IMR-90 (cell line): ENCODE measurements at regions of chr12 and their contacts with region 1.

Region 1: DNA sequence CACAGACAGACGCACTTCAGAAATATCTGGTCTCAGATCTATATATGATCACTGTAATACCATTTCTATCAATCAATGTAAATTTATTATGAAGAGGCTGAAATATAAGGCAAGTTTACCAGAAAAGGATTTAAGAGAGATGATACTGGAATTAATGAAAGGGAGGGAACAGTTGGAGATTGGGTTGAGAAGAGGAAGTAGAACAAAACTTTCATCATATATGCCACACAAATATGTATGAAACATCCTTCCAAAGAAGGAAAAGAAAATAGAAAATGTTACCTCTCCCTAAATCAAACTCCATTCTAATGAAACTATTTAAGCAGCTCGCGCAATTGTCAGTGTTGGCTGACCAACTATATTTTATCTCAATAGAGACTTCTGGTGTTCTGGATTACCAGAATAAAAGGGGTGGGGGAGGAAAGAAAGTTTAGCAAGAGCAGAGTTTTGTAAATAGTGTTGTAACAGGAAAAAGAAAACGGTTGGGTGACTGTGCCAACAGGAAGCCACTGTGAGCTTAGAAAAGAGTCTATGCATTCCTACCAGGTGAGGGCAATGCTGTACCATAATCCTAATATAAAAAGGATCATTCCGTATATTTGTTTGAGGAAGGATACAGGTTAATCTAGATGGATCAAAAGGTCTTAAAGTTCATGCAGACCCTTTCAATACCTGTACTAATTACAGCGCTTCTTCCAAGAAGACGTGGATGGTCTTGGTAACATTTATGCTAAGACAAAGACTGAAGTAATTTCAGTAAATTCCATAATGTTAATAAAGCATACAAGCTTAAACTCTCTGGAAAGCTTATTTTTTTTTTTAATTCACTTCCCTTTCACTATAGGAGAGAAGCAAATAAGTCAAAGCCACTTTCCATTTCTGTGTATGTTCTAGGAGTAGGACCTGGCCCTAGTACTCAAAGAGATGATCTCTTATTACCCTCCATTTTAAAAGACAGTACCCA is 14.5 kb upstream of the LLPH start:
- DNase-seq: peak; percentile 75
- ATAC-seq: peak; percentile 75
- H3K4me3 ChIP-seq: no peak overlapping the region
- H3K27ac ChIP-seq: no peak overlapping the region
- H3K4me1 ChIP-seq: no peaks in the 10 kb centered on the region
- H3K27me3 ChIP-seq: no peaks in the 10 kb centered on the region
- CTCF ChIP-seq: peak; percentile 70
- POLR2A ChIP-seq: no peak
- RAD21 ChIP-seq: peak; percentile 61

Region 2: GRCh38 chr12:65823513-65824375 is 321.3 kb before region 1 on chr12:
- CTCF ChIA-PET with region 1: no interaction called
- POLR2A ChIA-PET with region 1: no interaction called
- dilution Hi-C with region 1: no loop called
- in situ Hi-C with region 1: no loop called
- intact Hi-C with region 1: no loop called
- DNase-seq: peak; percentile 58
- ATAC-seq: peak; percentile 31
- H3K4me3 ChIP-seq: peak overlapping the region; percentile 93
- H3K27ac ChIP-seq: peak overlapping the region; percentile 99
- H3K4me1 ChIP-seq: peaks cover 9% of the 10 kb centered on the region; the same call in 1 of the 2 replicates
- H3K27me3 ChIP-seq: no peaks in the 10 kb centered on the region
- CTCF ChIP-seq: no peak
- POLR2A ChIP-seq: no peak
- RAD21 ChIP-seq: peak; percentile 1; the same call in 1 of the 2 replicates

Region 3: DNA sequence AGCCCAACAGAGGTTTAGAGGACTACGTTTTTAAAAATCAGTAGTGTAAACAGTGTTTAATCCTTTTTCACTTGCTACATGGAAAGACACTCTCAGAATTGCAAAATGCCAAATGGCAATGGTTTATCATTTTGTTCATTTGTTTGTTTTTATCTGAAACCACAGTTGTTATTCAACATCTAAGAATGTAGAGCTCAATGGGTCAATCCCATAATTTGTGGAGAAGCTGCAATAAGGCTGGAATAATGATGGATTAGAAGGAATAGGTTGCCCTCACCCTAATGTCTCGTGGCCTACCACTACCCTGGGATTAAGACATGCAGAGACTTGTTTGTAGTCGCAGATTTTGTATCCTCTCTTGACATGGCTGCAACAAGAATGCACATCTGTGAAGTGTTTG is 130.3 kb before region 1 on chr12:
- CTCF ChIA-PET with region 1: no interaction called
- POLR2A ChIA-PET with region 1: no interaction called
- dilution Hi-C with region 1: no loop called
- in situ Hi-C with region 1: no loop called
- intact Hi-C with region 1: no loop called
- DNase-seq: peak; percentile 71
- ATAC-seq: peak; percentile 59
- H3K4me3 ChIP-seq: no peak overlapping the region
- H3K27ac ChIP-seq: peak overlapping the region; percentile 18; the same call in 1 of the 2 replicates
- H3K4me1 ChIP-seq: peaks cover 17% of the 10 kb centered on the region
- H3K27me3 ChIP-seq: peaks cover 4% of the 10 kb centered on the region; the same call in 1 of the 2 replicates
- CTCF ChIP-seq: no peak
- POLR2A ChIP-seq: no peak
- RAD21 ChIP-seq: no peak

Region 4: GRCh38 chr12:66119870-66120241 is 25.2 kb before region 1 on chr12:
- CTCF ChIA-PET with region 1: interaction called, 4 read pairs
- POLR2A ChIA-PET with region 1: interaction called, 13 read pairs
- dilution Hi-C with region 1: no loop called
- in situ Hi-C with region 1: no loop called
- intact Hi-C with region 1: no loop called
- DNase-seq: no peak
- ATAC-seq: no peak
- H3K4me3 ChIP-seq: no peak overlapping the region
- H3K27ac ChIP-seq: no peak overlapping the region
- H3K4me1 ChIP-seq: no peaks in the 10 kb centered on the region
- H3K27me3 ChIP-seq: no peaks in the 10 kb centered on the region
- CTCF ChIP-seq: no peak
- POLR2A ChIP-seq: no peak
- RAD21 ChIP-seq: no peak